ENCODE measurements at regions of chr17 and their contacts with region 1.

Region 1: GRCh38 chr17:31758646-31759045 is 100.4 kb downstream of the COPRS start:
- DNase-seq: no peak
- H3K4me3 Mint-ChIP-seq: no peak overlapping the region
- H3K27ac Mint-ChIP-seq: no peak overlapping the region
- H3K4me1 Mint-ChIP-seq: no peaks in the 10 kb centered on the region
- H3K27me3 Mint-ChIP-seq: no peaks in the 10 kb centered on the region
- CTCF ChIP-seq: no peak

Region 2: GRCh38 chr17:31787857-31788570 is 29.4 kb after region 1 on chr17:
- CTCF ChIA-PET with region 1: no interaction called
- intact Hi-C with region 1: loop called (anchors 1 kb)
- DNase-seq: no peak
- H3K4me3 Mint-ChIP-seq: no peak overlapping the region
- H3K27ac Mint-ChIP-seq: no peak overlapping the region
- H3K4me1 Mint-ChIP-seq: peaks cover 13% of the 10 kb centered on the region
- H3K27me3 Mint-ChIP-seq: peaks cover 16% of the 10 kb centered on the region
- CTCF ChIP-seq: no peak

Measured in Calu3 (cell line).